WTC11 (cell line): ENCODE measurements at regions of chr4 and their contacts with region 1.

Region 1: DNA sequence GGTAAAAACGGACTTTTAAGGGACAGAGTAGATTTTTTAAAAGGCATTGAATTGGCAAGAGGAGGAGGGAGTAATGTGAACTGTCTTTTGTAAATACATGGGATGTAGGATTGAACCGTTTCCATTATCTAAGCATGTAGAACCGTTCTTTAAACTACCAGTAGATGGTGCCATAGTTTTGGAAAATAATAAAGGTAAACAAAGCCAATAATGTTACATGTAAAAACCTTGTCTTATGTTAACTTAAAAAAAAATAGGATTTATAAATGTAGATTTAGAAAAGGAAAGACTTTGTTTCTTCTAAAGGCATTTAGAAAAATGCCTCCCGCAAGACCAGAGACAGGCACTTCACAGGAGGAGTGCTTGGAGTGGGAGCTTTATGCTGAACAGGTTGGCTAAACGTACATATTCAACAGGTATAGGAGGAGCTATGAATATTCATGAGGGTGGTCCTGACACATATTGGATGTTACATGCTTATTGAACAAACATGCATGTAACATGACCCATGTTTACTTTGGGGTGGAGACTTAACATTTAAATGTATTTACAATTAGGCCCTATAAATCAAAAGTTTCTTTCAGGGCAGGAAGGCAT is 45.5 kb upstream of the FAM241A start:
- DNase-seq: no peak
- ATAC-seq: peak; percentile 92
- H3K4me3 Mint-ChIP-seq: no peak overlapping the region
- H3K27ac Mint-ChIP-seq: peak overlapping the region; percentile 17; the same call in 1 of the 2 replicates
- H3K4me1 Mint-ChIP-seq: peaks cover 3% of the 10 kb centered on the region; the same call in 1 of the 2 replicates
- H3K27me3 Mint-ChIP-seq: no peaks in the 10 kb centered on the region; the same call in 1 of the 2 replicates
- CTCF ChIP-seq: peak; percentile 24; the same call in 1 of the 2 replicates

Region 2: GRCh38 chr4:111662496-111662895 is 437.3 kb before region 1 on chr4:
- CTCF ChIA-PET with region 1: no interaction called
- POLR2A ChIA-PET with region 1: no interaction called
- DNase-seq: no peak
- ATAC-seq: no peak
- H3K4me3 Mint-ChIP-seq: no peak overlapping the region
- H3K27ac Mint-ChIP-seq: no peak overlapping the region
- H3K4me1 Mint-ChIP-seq: no peaks in the 10 kb centered on the region
- H3K27me3 Mint-ChIP-seq: peaks cover 2% of the 10 kb centered on the region; the same call in 1 of the 2 replicates
- CTCF ChIP-seq: no peak

Region 3: GRCh38 chr4:112130906-112131305 is 31.1 kb after region 1 on chr4:
- CTCF ChIA-PET with region 1: interaction called, 11 read pairs
- POLR2A ChIA-PET with region 1: interaction called, 3 read pairs
- DNase-seq: peak; percentile 18
- ATAC-seq: peak; percentile 93
- H3K4me3 Mint-ChIP-seq: peak overlapping the region; percentile 16; the same call in 1 of the 2 replicates
- H3K27ac Mint-ChIP-seq: peak overlapping the region; percentile 73
- H3K4me1 Mint-ChIP-seq: peaks cover 39% of the 10 kb centered on the region
- H3K27me3 Mint-ChIP-seq: no peaks in the 10 kb centered on the region
- CTCF ChIP-seq: no peak

Region 4: DNA sequence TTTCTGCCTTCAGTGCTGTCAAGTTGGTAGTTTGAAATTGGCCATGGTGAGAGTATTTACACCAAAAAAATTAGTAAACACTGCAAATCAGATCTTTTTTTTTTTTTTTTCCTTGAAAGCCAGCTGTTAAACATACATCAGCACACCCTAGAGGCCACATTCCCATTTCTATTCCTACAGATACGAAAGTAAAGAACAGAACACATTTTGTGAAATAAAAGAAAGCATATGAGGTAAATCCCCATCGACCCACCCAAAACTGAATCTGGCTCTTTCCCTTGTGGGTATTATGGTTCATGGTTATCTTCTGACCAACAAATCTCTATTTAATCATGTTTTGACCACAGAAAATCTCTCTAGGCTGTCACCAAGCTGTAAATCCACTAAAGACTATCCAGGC is 90.0 kb after region 1 on chr4:
- CTCF ChIA-PET with region 1: interaction called, 13 read pairs
- POLR2A ChIA-PET with region 1: no interaction called
- DNase-seq: no peak
- ATAC-seq: no peak
- H3K4me3 Mint-ChIP-seq: no peak overlapping the region
- H3K27ac Mint-ChIP-seq: peak overlapping the region; percentile 61; the same call in 1 of the 2 replicates
- H3K4me1 Mint-ChIP-seq: no peaks in the 10 kb centered on the region
- H3K27me3 Mint-ChIP-seq: no peaks in the 10 kb centered on the region
- CTCF ChIP-seq: no peak

Region 5: GRCh38 chr4:112231779-112232713 is 132.2 kb after region 1 on chr4 and contains the start of gene AP1AR:
- CTCF ChIA-PET with region 1: interaction called, 52 read pairs
- POLR2A ChIA-PET with region 1: interaction called, 4 read pairs
- DNase-seq: peak; percentile 93
- ATAC-seq: peak; percentile 83
- H3K4me3 Mint-ChIP-seq: peak within 1 kb of the TSS; percentile 92
- H3K27ac Mint-ChIP-seq: peak within 1 kb of the TSS; percentile 99
- H3K4me1 Mint-ChIP-seq: peaks cover 28% of the 10 kb centered on the region
- H3K27me3 Mint-ChIP-seq: no peaks in the 10 kb centered on the region; the same call in 1 of the 2 replicates
- CTCF ChIP-seq: no peak
- total RNA-seq, gene AP1AR: 22.4 to 26.1 TPM (median 23.1 TPM) in 3 replicates

Region 6: DNA sequence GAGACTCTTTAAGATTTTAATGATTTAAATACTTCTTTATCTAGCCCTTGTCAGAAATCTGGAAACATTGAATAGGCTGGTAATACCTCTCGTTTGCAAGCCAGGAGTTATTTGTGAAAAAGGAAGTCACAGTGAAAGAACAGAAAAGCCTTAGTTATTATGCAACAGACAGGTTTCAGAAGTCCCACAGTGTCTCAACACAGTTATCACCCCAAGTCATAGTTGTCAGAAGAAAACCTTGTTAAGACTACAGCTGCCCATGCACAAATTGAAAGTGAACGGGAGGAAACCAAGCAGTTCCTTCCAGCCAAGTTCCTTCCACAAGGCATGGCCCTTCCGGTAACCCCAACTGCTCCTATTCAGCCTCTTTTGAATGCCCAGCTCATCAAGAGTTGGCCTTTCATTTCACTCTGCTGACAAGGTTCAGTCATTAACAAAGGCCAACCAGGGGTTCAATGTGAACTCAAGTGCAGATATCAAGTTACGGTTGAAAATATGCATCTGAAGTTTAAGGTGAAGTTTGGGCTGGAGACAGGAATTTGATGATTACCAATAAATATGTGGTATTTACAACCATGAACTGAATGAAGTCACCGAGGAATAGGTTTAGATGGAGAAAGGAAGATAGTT is 212.9 kb after region 1 on chr4:
- CTCF ChIA-PET with region 1: interaction called, 16 read pairs
- POLR2A ChIA-PET with region 1: no interaction called
- DNase-seq: no peak
- ATAC-seq: peak; percentile 30; the same call in 1 of the 2 replicates
- H3K4me3 Mint-ChIP-seq: no peak overlapping the region
- H3K27ac Mint-ChIP-seq: no peak overlapping the region
- H3K4me1 Mint-ChIP-seq: peaks cover 23% of the 10 kb centered on the region
- H3K27me3 Mint-ChIP-seq: peaks cover 5% of the 10 kb centered on the region; the same call in 1 of the 2 replicates
- CTCF ChIP-seq: no peak